Left colon (tissue), 2 donors: ENCODE measurements at regions of chr14 and their contacts with region 1.

Region 1: DNA sequence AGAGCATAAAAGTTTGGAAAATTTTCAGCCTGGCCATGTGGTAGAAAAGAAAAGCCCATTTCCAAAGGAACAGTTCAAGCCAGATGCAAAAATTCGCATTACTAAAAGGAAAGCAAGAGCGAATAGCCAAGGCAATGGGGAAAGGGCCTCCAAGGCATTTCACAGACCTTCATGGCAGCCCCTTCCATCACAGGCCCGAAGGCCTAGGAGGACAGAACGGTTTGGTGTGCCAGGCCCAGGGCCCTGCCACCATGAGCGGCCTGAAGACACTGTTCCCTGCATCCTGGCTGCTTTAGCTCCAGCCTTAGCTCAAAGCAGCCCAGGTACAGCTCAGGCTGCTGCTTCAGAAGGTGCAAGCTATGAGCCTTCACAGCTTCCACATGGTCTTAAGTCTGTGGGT is 243.5 kb downstream of the PCNX1 start:
- DNase-seq: no peak
- ATAC-seq: no peak

Region 2: DNA sequence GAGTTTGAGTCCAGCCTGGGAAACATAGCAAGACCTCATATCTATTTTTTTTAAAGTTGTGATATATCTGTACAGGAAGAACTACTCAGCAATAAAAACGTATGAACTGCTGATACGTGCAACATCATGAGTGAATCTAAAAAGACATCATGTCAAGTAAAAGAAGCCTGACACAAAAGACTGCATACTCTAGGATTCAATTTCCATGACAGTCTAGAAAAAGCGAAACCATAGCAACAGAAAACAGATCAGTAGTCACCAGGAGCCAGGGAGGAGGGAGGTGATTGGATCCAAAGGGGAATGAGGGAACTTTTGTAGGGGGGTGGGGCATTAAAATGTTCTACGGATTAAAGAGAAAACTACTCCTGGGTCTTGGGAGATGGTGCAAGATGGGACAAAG is 772.8 kb after region 1 on chr14:
- intact Hi-C with region 1: loop called in 1 of 2 experiments (anchors 5 kb)
- DNase-seq: no peak
- ATAC-seq: no peak